ENCODE measurements at regions of chr12 and their contacts with region 1.

Region 1: DNA sequence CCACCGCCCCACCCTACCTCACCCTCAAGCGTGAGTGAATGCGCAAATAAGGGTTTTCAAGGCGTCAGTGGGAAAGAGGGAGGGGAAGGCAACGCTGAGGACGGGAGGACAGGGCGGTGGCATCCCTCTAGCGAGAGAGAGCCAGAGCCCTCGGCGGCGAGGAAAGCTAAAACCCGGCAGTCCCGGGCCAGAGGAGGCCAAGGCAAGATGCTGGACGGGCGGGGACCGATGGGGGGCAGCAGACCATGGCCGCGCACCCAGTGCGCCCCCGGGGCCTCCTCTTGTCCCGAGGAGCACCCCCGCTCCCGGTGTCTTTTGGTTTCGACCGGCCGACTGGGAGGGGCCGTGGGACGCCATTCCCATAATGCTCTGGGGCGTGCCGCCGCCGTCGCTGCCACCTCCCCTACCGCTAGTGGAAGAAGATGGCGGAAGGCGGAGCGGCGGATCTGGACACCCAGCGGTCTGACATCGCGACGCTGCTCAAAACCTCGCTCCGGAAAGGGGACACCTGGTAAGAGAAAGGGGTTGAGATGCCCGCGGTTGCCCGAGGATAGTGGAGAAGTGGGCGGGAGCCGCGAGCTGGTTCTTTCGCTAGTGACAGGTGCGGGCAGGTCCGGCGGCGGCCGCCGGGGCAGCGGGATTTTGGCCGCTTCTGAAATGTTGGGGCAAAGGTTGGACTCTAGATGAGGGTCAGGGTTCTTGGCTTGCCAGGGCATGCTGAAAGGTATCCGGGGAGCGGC is at the start of gene USP15:
- DNase-seq: peak; percentile 97
- ATAC-seq: peak; percentile 67
- H3K4me3 Mint-ChIP-seq: peak within 1 kb of the TSS; percentile 87
- H3K27ac Mint-ChIP-seq: peak within 1 kb of the TSS; percentile 100
- H3K4me1 Mint-ChIP-seq: peaks cover 58% of the 10 kb centered on the region
- H3K27me3 Mint-ChIP-seq: no peaks in the 10 kb centered on the region
- total RNA-seq, gene USP15: 87.2 to 98.0 TPM

Region 2: DNA sequence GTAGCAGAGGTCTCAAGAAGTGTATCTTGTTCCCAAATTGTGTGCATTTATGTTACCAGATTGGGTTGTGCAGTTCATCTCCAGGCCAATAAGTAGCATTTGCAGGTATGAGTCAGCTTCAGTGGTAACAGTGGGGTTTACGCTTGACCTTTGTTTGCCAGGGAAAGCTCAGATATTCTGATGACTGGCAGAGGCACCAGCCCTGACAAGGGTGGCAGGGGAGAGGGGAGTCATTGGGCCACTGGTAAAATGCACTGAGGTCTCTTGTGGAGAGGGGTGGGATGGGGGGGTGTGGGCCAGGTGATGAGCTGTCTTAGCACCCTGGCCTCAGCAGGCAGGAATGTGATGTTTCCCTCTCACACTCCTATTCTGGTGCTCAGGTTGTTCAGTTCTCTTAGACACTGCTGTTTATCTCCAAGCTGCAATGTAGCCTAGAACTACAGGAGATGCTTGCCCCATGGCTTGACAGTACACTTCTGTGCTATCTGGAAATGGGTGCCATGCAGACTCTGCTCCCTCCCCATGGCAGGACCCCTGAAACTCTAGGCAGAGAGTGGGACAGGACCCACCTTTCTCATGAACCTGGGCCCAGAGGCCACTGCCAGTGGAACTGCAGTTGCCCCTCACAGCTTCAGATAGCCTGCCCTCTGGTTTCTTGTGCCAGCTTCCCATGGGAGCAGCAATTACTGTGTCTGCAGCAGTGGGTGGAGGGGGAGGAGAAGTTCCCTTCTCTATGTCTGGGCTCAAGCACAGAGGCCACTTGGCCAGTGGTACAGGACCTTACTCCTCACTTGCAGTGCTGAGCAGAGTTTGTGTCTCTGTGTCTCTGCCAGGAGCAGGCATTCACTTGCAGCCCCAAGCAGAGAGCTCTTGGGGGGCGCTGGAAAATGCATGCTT is 31.9 kb after region 1 on chr12:
- CTCF ChIA-PET with region 1: no interaction called
- POLR2A ChIA-PET with region 1: no interaction called
- intact Hi-C with region 1: loop called (anchors 1 to 2 kb)
- DNase-seq: peak; percentile 56
- ATAC-seq: peak; percentile 86
- H3K4me3 Mint-ChIP-seq: no peak overlapping the region
- H3K27ac Mint-ChIP-seq: peak overlapping the region; percentile 53
- H3K4me1 Mint-ChIP-seq: peaks cover 76% of the 10 kb centered on the region
- H3K27me3 Mint-ChIP-seq: no peaks in the 10 kb centered on the region

Region 3: GRCh38 chr12:62466594-62467491 is 206.7 kb after region 1 on chr12 and contains the start of gene MON2:
- CTCF ChIA-PET with region 1: no interaction called
- POLR2A ChIA-PET with region 1: interaction called, 3 read pairs
- intact Hi-C with region 1: loop called (anchors 1 to 5 kb)
- DNase-seq: peak; percentile 92
- ATAC-seq: peak; percentile 97
- H3K4me3 Mint-ChIP-seq: peak within 1 kb of the TSS; percentile 92
- H3K27ac Mint-ChIP-seq: peak within 1 kb of the TSS; percentile 93
- H3K4me1 Mint-ChIP-seq: peaks cover 20% of the 10 kb centered on the region
- H3K27me3 Mint-ChIP-seq: peaks cover 4% of the 10 kb centered on the region
- total RNA-seq, gene MON2: 26.9 to 31.3 TPM

Region 4: DNA sequence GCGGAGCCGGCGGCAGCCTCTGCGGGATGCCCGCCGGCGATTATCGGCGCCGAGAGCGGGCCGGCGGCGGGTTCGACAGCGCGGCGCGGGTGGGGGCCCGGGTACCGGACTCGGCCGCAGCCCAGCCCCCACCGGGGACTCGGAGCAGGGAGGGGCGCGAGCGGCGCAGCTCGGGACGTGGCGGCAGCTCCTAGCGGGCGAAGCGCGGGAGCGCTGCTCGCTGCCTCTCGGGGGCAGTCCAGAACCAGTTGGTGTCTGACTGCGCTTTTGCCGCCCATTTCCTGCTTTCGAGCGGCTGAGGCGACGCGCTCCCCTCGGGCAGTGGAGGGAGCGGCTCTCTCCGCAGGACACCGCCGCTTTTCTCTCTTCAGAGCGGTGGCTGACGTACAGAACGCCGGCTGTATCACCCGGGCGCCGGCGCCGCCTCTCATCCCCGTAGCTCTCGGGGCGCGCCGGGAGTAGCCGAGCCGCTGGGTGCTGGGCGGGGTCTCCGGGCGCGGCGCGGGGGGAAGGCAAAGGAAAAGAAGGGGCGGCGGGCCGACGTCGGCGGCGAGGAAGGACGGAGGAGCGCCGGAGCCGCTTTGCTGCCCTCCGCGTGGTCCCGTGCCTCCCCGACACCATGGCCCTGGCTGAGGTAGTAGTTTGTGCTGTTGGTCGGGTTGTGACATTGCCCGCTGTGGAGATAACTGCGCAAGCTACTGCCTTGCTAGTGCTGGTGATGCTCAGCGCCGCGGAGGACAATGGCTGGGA is 343.1 kb after region 1 on chr12:
- CTCF ChIA-PET with region 1: no interaction called
- POLR2A ChIA-PET with region 1: interaction called, 5 read pairs
- intact Hi-C with region 1: loop called (anchors 1 to 2 kb)
- DNase-seq: peak; percentile 87
- ATAC-seq: peak; percentile 78
- H3K4me3 Mint-ChIP-seq: peak overlapping the region; percentile 77
- H3K27ac Mint-ChIP-seq: peak overlapping the region; percentile 97
- H3K4me1 Mint-ChIP-seq: peaks cover 35% of the 10 kb centered on the region
- H3K27me3 Mint-ChIP-seq: no peaks in the 10 kb centered on the region

Region 5: DNA sequence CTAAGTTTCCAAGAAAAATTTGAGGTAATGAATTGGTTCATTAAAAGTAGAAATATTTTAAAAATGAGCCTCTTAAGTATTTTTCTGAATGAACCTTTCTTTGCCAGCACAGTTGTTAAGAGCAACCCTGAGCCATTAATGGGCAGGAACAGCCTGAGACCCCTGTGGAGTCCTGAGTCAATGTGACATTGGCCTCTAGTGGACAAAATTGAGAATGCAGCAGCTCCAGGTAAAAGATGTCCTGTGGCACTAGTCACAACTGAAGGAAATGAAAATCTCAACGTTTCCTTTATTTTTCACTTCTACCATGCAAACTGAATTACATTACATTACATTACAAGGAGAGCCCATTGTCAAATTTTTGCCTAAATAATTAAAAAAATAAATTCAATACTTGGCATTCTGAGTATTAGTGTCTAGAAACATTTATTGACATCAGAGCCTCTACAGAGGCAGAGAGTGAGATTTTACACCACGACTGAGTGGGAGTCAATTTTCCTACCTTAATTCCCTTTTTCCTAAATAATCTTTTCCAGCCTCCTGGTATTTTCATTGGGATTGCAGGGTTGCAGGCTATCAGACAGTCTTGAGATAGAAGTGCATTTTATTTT is 539.1 kb after region 1 on chr12:
- CTCF ChIA-PET with region 1: no interaction called
- POLR2A ChIA-PET with region 1: interaction called, 3 read pairs
- intact Hi-C with region 1: loop called in 1 of 2 experiments (anchors 5 kb)
- DNase-seq: peak; percentile 69
- ATAC-seq: peak; percentile 80
- H3K4me3 Mint-ChIP-seq: no peak overlapping the region
- H3K27ac Mint-ChIP-seq: no peak overlapping the region
- H3K4me1 Mint-ChIP-seq: no peaks in the 10 kb centered on the region
- H3K27me3 Mint-ChIP-seq: no peaks in the 10 kb centered on the region

Measured in activated CD4-positive, alpha-beta T cell treated with anti-CD3 and anti-CD28 coated beads for 36 hours (primary cell).